PC-3 (cell line): ENCODE measurements at regions of chr5 and their contacts with region 1.

Region 1: GRCh38 chr5:9513827-9514226 is 32.0 kb downstream of the SEMA5A start:
- DNase-seq: peak; percentile 68
- ATAC-seq: peak; percentile 56; the same call in 1 of the 2 replicates
- H3K4me3 ChIP-seq: no peak overlapping the region
- H3K27ac ChIP-seq: no peak overlapping the region
- H3K4me1 ChIP-seq: no peaks in the 10 kb centered on the region
- H3K27me3 ChIP-seq: no peaks in the 10 kb centered on the region
- CTCF ChIP-seq: peak; percentile 75

Region 2: DNA sequence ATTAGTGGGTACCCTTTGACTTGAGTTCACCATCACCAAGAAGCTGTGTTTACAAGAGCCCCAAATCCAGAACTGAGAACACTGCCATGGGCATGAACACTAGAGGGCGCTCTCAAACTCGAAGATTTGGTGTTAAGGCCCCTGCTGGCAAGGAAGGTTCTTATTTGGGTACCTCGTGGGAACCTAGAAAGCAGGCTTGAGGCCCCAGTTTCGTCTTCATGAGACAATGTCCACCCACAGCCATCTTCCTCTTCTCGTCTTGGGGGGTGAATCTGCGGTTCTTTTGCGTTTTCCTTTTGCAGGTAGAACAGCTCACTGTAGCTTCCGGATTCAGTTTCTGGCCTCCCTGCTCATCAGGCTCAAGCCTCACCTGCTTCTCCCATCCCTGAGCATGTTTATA is 152.0 kb before region 1 on chr5:
- CTCF ChIA-PET with region 1: interaction called, 4 read pairs
- POLR2A ChIA-PET with region 1: no interaction called
- intact Hi-C with region 1: loop called (anchors 5 kb)
- DNase-seq: peak; percentile 97
- ATAC-seq: peak; percentile 74
- H3K4me3 ChIP-seq: no peak overlapping the region
- H3K27ac ChIP-seq: no peak overlapping the region
- H3K4me1 ChIP-seq: peaks cover 15% of the 10 kb centered on the region
- H3K27me3 ChIP-seq: no peaks in the 10 kb centered on the region
- CTCF ChIP-seq: peak; percentile 100

Region 3: GRCh38 chr5:9490494-9491097 is 23.2 kb before region 1 on chr5:
- CTCF ChIA-PET with region 1: no interaction called
- POLR2A ChIA-PET with region 1: no interaction called
- intact Hi-C with region 1: no loop called
- DNase-seq: no peak
- ATAC-seq: no peak
- H3K4me3 ChIP-seq: no peak overlapping the region
- H3K27ac ChIP-seq: no peak overlapping the region
- H3K4me1 ChIP-seq: no peaks in the 10 kb centered on the region
- H3K27me3 ChIP-seq: no peaks in the 10 kb centered on the region
- CTCF ChIP-seq: no peak